CD8-positive, alpha-beta T cell (primary cell): ENCODE measurements at regions of chr20 and their contacts with region 1.

Region 1: DNA sequence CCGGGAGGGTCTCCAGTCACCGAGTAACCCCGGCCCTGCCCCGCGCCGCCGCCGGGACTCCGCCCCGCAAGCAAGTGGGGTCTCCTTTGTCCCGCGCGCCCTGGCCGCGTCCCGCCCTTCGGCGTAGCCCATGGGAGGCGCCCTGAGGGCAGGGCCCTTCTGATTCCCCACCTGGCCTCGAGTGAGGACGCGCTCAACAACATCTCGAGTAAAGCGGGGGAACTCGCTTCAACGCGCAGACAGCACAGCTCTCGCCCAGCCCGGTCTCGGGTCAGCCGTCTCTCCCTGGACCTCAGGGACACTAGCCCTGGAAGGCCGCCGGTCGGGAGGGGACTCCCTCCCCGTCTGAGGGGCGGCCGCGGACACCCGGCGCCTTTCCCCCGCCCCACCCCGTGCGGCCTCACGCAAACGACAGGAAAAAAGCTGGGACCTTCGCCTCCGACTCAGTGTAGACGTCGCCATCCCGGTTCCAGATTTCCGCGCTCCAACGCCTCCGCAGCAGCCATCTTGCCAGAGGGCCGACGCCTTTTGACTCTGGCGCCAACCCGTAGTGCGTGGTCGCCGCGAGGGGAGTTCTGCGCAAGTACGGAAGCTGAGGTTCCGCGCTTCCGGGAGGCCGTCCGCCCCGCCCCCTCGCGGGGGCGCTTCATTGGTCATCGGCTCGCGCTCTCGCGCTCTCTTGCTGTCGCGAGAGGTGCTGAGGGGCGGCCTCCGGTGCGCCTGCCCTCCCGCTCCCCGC is 412 bp upstream of the GID8 start:
- DNase-seq: peak; percentile 94 to 98 (median 97)
- ATAC-seq: peak; percentile 89
- H3K4me3 ChIP-seq: peak overlapping the region; percentile 96 to 99
- H3K4me3 Mint-ChIP-seq: peak overlapping the region; percentile 97
- H3K27ac ChIP-seq: peak overlapping the region; percentile 88 to 92
- H3K27ac Mint-ChIP-seq: peak overlapping the region; percentile 96
- H3K4me1 ChIP-seq: peaks cover 57% of the 10 kb centered on the region
- H3K4me1 Mint-ChIP-seq: peaks cover 36% of the 10 kb centered on the region
- H3K27me3 ChIP-seq: no peaks in the 10 kb centered on the region
- H3K27me3 Mint-ChIP-seq: no peaks in the 10 kb centered on the region
- CTCF ChIP-seq: no peak

Region 2: GRCh38 chr20:62808211-62808865 is 129.2 kb before region 1 on chr20:
- CTCF ChIA-PET with region 1: no interaction called
- POLR2A ChIA-PET with region 1: no interaction called
- intact Hi-C with region 1: loop called in 1 of 2 experiments (anchors 2 kb)
- DNase-seq: peak; percentile 58 to 87 (median 78)
- ATAC-seq: peak; percentile 49
- H3K4me3 ChIP-seq: no peak overlapping the region
- H3K4me3 Mint-ChIP-seq: peak overlapping the region; percentile 50
- H3K27ac ChIP-seq: no peak overlapping the region
- H3K27ac Mint-ChIP-seq: peak overlapping the region; percentile 60
- H3K4me1 ChIP-seq: peaks cover 37% of the 10 kb centered on the region
- H3K4me1 Mint-ChIP-seq: peaks cover 29% of the 10 kb centered on the region
- H3K27me3 ChIP-seq: no peaks in the 10 kb centered on the region
- H3K27me3 Mint-ChIP-seq: no peaks in the 10 kb centered on the region
- CTCF ChIP-seq: peak; percentile 95

Region 3: DNA sequence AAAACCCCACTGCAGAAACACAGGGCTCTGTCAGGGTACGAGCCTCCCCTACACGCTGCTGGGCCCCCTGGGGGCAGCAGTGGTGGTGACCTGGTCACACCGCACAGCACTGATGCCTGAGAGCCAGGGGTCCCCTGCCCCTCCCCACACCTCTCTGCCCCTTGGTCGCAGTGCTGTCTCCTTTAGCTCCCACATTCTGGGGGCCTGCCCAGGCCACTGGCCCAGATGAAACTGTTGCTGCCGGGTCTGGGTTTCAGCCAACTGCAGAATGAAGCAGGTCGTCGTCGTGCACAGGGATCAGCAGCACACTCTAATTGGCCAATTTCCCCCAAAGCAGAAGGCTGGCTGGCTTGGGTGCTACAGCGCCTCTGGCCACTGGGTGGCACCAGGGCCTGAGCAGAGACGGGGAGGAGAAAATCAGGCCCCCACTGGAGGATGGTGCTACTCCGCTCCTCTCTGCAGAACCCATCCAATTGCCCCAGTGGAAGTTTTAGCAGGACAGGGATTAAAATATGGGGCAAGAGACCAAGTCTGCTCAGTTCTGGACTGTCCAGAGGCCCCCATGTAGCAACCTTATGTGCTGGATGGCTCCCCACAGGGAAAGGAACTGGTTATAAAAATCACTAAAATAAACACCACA is 37.4 kb before region 1 on chr20:
- CTCF ChIA-PET with region 1: interaction called, 12 read pairs
- POLR2A ChIA-PET with region 1: interaction called, 4 read pairs
- intact Hi-C with region 1: loop called in 1 of 2 experiments (anchors 1 kb)
- DNase-seq: peak; percentile 62 to 88 (median 81)
- ATAC-seq: peak; percentile 93
- H3K4me3 ChIP-seq: no peak overlapping the region
- H3K4me3 Mint-ChIP-seq: peak overlapping the region; percentile 29
- H3K27ac ChIP-seq: peak overlapping the region; percentile 17 to 33
- H3K27ac Mint-ChIP-seq: peak overlapping the region; percentile 90
- H3K4me1 ChIP-seq: peaks cover 23% of the 10 kb centered on the region
- H3K4me1 Mint-ChIP-seq: peaks cover 30% of the 10 kb centered on the region
- H3K27me3 ChIP-seq: no peaks in the 10 kb centered on the region
- H3K27me3 Mint-ChIP-seq: no peaks in the 10 kb centered on the region
- CTCF ChIP-seq: peak; percentile 93

Region 4: GRCh38 chr20:62921119-62921687 is 16.3 kb before region 1 on chr20:
- CTCF ChIA-PET with region 1: interaction called, 28 read pairs
- POLR2A ChIA-PET with region 1: interaction called, 49 read pairs
- intact Hi-C with region 1: loop called in 1 of 2 experiments (anchors 1 kb)
- DNase-seq: peak; percentile 20 to 85 (median 65)
- ATAC-seq: peak; percentile 66
- H3K4me3 ChIP-seq: peak overlapping the region in 1 of 2 experiments; percentile 18
- H3K4me3 Mint-ChIP-seq: peak overlapping the region; percentile 83
- H3K27ac ChIP-seq: peak overlapping the region in 1 of 2 experiments; percentile 62
- H3K27ac Mint-ChIP-seq: peak overlapping the region; percentile 89
- H3K4me1 ChIP-seq: peaks cover 89% of the 10 kb centered on the region
- H3K4me1 Mint-ChIP-seq: peaks cover 82% of the 10 kb centered on the region
- H3K27me3 ChIP-seq: no peaks in the 10 kb centered on the region
- H3K27me3 Mint-ChIP-seq: no peaks in the 10 kb centered on the region
- CTCF ChIP-seq: peak; percentile 80

Region 5: DNA sequence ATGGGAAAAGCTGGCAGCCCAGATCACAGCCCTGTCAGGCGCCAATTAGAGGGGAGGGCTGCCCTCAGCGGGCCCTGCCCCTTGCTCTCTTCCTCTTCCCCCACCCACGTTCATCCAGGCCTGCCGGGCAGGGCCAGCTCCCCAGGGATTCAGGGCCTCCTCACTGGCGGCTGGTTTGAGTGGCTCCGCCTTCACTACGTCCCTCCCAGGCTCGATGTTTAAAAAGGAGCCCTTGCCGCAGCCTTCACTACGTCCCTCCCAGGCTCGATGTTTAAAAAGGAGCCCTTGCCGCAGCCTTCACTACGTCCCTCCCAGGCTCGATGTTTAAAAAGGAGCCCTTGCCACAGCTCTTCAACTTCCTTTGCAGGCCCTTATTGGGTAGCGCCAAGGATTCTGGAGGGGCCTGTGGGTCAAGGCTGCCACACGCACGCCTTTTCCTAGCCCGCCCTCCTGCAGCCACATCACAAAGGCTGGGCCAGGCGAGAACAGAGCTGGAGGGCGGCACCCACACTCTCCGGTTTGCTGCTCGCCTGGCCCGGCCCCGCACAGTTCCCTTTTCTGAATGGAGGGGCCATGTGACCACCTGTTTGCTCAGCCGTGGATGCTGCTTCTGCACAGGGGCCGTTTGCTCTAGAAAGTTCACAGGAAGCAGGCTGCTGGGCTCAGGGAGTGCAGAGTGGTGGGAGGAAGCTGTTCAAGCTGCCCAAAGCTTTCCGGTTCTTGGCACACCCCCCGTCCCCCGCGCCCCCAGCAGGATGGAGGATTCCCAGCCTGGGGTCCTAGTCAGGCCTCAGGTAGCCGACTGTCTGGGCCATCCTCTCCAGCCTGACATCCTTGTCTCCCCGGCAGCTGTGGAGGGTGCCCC is 16.5 kb after region 1 on chr20:
- CTCF ChIA-PET with region 1: interaction called, 8 read pairs
- POLR2A ChIA-PET with region 1: interaction called, 50 read pairs
- intact Hi-C with region 1: loop called (anchors 1 kb)
- DNase-seq: peak; percentile 46 to 93 (median 81)
- ATAC-seq: peak; percentile 88
- H3K4me3 ChIP-seq: peak overlapping the region; percentile 50 to 57
- H3K4me3 Mint-ChIP-seq: peak overlapping the region; percentile 82
- H3K27ac ChIP-seq: peak overlapping the region; percentile 62 to 92
- H3K27ac Mint-ChIP-seq: peak overlapping the region; percentile 91
- H3K4me1 ChIP-seq: peaks cover 48% of the 10 kb centered on the region
- H3K4me1 Mint-ChIP-seq: peaks cover 42% of the 10 kb centered on the region
- H3K27me3 ChIP-seq: no peaks in the 10 kb centered on the region
- H3K27me3 Mint-ChIP-seq: no peaks in the 10 kb centered on the region
- CTCF ChIP-seq: no peak

Region 6: GRCh38 chr20:63216041-63216848 is 278.7 kb after region 1 on chr20 and contains the start of gene YTHDF1:
- CTCF ChIA-PET with region 1: no interaction called
- POLR2A ChIA-PET with region 1: no interaction called
- intact Hi-C with region 1: loop called in 1 of 2 experiments (anchors 5 kb)
- DNase-seq: peak; percentile 86 to 98 (median 95)
- ATAC-seq: peak; percentile 96
- H3K4me3 ChIP-seq: peak within 1 kb of the TSS; percentile 68 to 84
- H3K4me3 Mint-ChIP-seq: peak within 1 kb of the TSS; percentile 91
- H3K27ac ChIP-seq: peak within 1 kb of the TSS; percentile 73 to 74
- H3K27ac Mint-ChIP-seq: peak within 1 kb of the TSS; percentile 94
- H3K4me1 ChIP-seq: peaks cover 44% of the 10 kb centered on the region
- H3K4me1 Mint-ChIP-seq: peaks cover 44% of the 10 kb centered on the region
- H3K27me3 ChIP-seq: no peaks in the 10 kb centered on the region
- H3K27me3 Mint-ChIP-seq: peaks cover 2% of the 10 kb centered on the region
- CTCF ChIP-seq: no peak
- total RNA-seq, gene YTHDF1: 44.8 to 45.7 TPM